AG04450 (cell line): ENCODE measurements at regions of chr4 and their contacts with region 1.

Region 1: DNA sequence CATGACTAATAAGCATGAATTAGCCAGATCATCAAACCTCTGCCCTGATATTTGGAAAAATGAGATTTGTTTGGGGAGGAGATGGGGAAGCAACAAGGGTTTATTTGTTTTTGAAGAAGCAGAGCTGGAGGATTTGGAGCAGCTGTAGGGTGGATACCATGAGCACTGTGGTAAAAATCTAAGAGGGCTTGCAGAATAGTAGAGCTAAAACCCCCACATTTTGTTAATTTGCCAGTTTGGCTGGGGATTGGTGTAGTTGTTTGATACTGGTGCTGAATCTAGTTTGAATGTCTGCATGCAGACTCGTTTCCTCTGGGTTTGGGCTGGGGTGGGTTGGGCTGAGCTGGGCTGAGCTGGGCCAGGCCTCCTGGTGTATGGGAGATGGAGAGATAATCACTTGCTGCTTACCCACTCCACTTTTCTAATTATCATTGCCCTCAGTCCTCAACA is 43.7 kb downstream of the SMAD1 start:
- DNase-seq: peak; percentile 47
- H3K4me3 ChIP-seq: no peak overlapping the region
- H3K27ac ChIP-seq: peak overlapping the region; percentile 41
- H3K27me3 ChIP-seq: no peaks in the 10 kb centered on the region
- CTCF ChIP-seq: no peak

Region 2: GRCh38 chr4:145481164-145481941 is 44.0 kb before region 1 on chr4 and contains the start of gene SMAD1:
- CTCF ChIA-PET with region 1: interaction called, 6 read pairs
- POLR2A ChIA-PET with region 1: interaction called, 12 read pairs
- DNase-seq: peak; percentile 48
- H3K4me3 ChIP-seq: peak within 1 kb of the TSS; percentile 72
- H3K27ac ChIP-seq: peak within 1 kb of the TSS; percentile 92
- H3K27me3 ChIP-seq: no peaks in the 10 kb centered on the region
- CTCF ChIP-seq: no peak
- polyA plus RNA-seq, gene SMAD1: 59.0 and 64.7 TPM in 2 replicates

Region 3: DNA sequence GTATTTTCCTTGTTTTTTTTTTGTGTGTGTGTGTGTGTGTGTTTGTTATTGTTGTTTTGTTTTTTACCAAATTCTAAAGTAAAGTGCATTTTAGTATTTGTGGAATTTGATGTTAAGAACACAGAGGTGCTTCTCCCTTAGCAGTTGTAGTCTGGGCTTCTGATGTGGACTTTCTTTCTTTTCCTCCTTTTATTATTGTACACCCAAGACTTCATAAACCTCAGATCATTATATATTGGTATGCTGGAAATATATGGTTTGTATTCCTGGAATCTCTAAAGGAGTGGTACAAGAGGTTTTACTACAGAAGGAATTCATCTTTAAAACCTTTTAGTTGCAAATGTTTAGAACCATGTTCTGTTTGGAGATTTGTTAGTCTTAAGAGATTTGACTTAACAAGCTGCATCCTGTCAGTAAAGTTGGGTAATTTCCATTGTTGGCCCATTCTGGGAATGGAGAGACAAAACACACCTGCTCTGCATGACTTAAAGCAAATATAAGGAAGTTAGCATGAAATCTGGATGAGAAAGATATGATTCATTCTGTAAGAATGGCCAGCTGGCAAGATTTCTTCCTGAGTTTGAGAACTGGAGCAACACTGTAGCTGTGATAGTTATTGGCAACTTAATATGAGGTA is 20.3 kb after region 1 on chr4:
- CTCF ChIA-PET with region 1: no interaction called
- POLR2A ChIA-PET with region 1: interaction called, 10 read pairs
- DNase-seq: peak; percentile 95
- H3K4me3 ChIP-seq: no peak overlapping the region
- H3K27ac ChIP-seq: no peak overlapping the region
- H3K27me3 ChIP-seq: no peaks in the 10 kb centered on the region
- CTCF ChIP-seq: no peak